Activated CD8-positive, alpha-beta T cell treated with anti-CD3 and anti-CD28 coated beads for 36 hours (primary cell): ENCODE measurements at regions of chr13 and their contacts with region 1.

Region 1: DNA sequence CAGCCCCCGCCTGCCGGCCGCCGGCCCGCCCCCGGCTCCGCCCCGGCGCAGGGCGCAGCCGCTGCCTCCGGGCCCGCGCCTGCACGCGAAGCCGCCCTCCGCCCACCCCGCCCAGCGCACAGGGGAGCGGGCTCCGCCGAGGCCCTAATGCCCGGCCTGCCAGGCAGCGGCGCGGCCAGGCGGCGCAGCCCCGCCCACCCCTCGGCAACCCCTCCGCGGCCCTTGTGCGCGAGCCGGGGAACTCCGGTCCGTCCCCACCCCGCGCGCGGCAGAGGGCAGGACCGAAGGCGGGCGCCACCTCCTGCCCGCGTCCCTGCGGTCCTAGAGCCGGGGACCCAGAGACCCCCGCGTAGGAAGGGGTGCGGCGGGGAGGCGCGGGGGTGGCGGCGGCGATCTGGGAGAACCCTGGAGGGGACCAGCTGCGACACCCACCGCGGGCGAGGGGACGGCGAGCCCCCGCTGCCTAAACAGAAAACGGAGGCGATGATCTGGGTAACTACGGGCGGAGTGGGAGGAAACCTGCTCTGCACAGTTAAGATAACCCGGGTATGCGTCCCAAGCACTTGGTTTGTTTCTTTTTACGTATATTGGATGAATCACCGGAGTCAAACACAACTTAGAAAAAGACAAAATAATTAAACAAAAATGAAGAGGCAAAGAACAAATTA is 350 bp upstream of the USP12 start:
- DNase-seq: peak; percentile 88
- ATAC-seq: peak; percentile 84
- H3K4me3 Mint-ChIP-seq: peak overlapping the region; percentile 70
- H3K27ac Mint-ChIP-seq: peak overlapping the region; percentile 83
- H3K4me1 Mint-ChIP-seq: peaks cover 54% of the 10 kb centered on the region
- H3K27me3 Mint-ChIP-seq: no peaks in the 10 kb centered on the region
- CTCF ChIP-seq: no peak

Region 2: GRCh38 chr13:27130979-27131623 is 40.9 kb before region 1 on chr13:
- CTCF ChIA-PET with region 1: interaction called, 6 read pairs
- POLR2A ChIA-PET with region 1: interaction called, 28 read pairs
- intact Hi-C with region 1: loop called (anchors 2 kb)
- DNase-seq: peak; percentile 90
- ATAC-seq: peak; percentile 86
- H3K4me3 Mint-ChIP-seq: peak overlapping the region; percentile 7
- H3K27ac Mint-ChIP-seq: peak overlapping the region; percentile 82
- H3K4me1 Mint-ChIP-seq: peaks cover 89% of the 10 kb centered on the region
- H3K27me3 Mint-ChIP-seq: no peaks in the 10 kb centered on the region
- CTCF ChIP-seq: no peak

Region 3: GRCh38 chr13:27251166-27252091 is 79.5 kb after region 1 on chr13 and contains the start of gene RPL21:
- CTCF ChIA-PET with region 1: interaction called, 3 read pairs
- POLR2A ChIA-PET with region 1: interaction called, 5 read pairs
- intact Hi-C with region 1: loop called (anchors 2 kb)
- DNase-seq: peak; percentile 94
- ATAC-seq: peak; percentile 94
- H3K4me3 Mint-ChIP-seq: peak within 1 kb of the TSS; percentile 96
- H3K27ac Mint-ChIP-seq: peak within 1 kb of the TSS; percentile 99
- H3K4me1 Mint-ChIP-seq: peaks cover 37% of the 10 kb centered on the region
- H3K27me3 Mint-ChIP-seq: no peaks in the 10 kb centered on the region
- CTCF ChIP-seq: no peak
- total RNA-seq, gene RPL21: 1,401 to 1,445 TPM

Region 4: GRCh38 chr13:27293873-27294515 is 122.0 kb after region 1 on chr13:
- CTCF ChIA-PET with region 1: no interaction called
- POLR2A ChIA-PET with region 1: no interaction called
- intact Hi-C with region 1: no loop called
- DNase-seq: peak; percentile 20
- ATAC-seq: peak; percentile 74
- H3K4me3 Mint-ChIP-seq: no peak overlapping the region
- H3K27ac Mint-ChIP-seq: peak overlapping the region; percentile 63
- H3K4me1 Mint-ChIP-seq: peaks cover 31% of the 10 kb centered on the region
- H3K27me3 Mint-ChIP-seq: no peaks in the 10 kb centered on the region
- CTCF ChIP-seq: no peak